Breast epithelium (tissue), 4 donors: ENCODE measurements at regions of chr2 and their contacts with region 1.

Region 1: DNA sequence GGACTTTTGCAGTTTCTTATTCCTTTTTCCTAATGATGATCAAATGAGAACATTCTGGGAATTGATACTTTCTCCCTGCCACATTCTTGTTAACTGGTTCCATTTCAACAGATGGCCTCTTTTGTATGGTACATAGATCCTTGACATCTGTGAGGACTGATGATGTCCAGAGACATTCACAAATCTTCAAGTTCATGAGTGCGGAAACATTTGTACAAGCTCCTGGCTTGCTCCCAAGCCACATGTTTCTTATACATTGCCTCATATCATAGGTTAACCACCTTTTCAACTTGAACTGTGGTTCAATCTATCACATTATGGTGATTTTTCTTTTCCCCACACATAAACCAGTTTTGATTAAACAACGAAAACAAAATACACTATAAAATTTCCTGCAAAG is 267.3 kb downstream of the CLIP4 start:
- DNase-seq: no peak
- H3K4me3 ChIP-seq: no peak overlapping the region
- H3K27ac ChIP-seq: no peak overlapping the region
- H3K4me1 ChIP-seq: no peaks in the 10 kb centered on the region
- H3K27me3 ChIP-seq: no peaks in the 10 kb centered on the region
- CTCF ChIP-seq: no peak
- POLR2A ChIP-seq: no peak

Region 2: GRCh38 chr2:29361231-29361630 is 21.3 kb before region 1 on chr2:
- intact Hi-C with region 1: loop called (anchors 1 kb)
- DNase-seq: no peak
- H3K4me3 ChIP-seq: no peak overlapping the region
- H3K27ac ChIP-seq: no peak overlapping the region
- H3K4me1 ChIP-seq: no peaks in the 10 kb centered on the region
- H3K27me3 ChIP-seq: no peaks in the 10 kb centered on the region
- CTCF ChIP-seq: no peak
- POLR2A ChIP-seq: no peak

Region 3: GRCh38 chr2:30287857-30288513 is 905.5 kb after region 1 on chr2:
- intact Hi-C with region 1: no loop called
- DNase-seq: no peak
- H3K4me3 ChIP-seq: no peak overlapping the region
- H3K27ac ChIP-seq: no peak overlapping the region
- H3K4me1 ChIP-seq: no peaks in the 10 kb centered on the region
- H3K27me3 ChIP-seq: no peaks in the 10 kb centered on the region
- CTCF ChIP-seq: no peak
- POLR2A ChIP-seq: no peak